Ovary (tissue), 10 donors: ENCODE measurements at regions of chr3 and their contacts with region 1.

Region 1: DNA sequence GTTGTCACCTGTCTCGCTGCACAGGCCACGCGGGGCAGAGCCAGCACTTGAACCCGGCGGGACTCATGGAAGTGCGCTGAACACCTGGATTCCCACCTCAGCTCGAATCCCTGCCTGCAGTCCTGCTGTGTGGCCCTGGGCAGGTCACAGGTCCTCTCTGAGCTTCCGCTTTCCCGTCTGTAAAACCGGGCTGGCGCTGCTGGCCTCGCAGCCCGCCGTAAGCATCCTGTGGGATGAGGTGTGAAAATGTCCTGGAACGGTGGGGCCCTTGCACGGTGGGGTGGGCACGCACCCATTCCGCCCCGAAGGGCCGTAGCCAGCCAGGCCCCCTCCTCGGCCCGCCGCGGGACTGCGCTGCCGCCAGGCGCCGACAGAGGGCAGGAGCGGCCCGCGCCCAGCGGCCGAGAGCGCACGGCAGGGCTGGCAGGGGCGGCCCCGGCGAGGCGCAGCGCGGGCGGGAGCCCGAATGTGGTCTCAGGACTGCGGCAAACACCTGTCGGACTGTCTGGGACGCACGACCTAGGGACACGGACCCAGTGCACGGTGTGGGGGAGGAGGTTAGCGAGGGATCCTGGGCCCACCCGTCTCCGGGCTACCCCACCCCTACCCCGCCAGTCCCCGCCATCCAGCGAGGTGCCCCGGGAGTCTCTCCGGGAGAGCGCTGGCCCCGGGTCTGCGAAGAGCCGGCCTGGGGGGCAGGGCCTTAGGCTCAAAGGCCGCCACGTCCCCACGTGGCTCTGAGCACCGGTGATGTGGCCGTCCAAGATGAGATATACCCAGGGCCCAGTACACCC is 40.4 kb downstream of the DNAJB8 start:
- DNase-seq: peak; percentile 33 to 69 (median 47)
- H3K4me3 ChIP-seq: no peak overlapping the region
- H3K27ac ChIP-seq: no peak overlapping the region
- H3K4me1 ChIP-seq: no peaks in the 10 kb centered on the region
- H3K27me3 ChIP-seq: no peaks in the 10 kb centered on the region
- CTCF ChIP-seq: peak; percentile 55 to 93 (median 90)
- EP300 ChIP-seq: no peak
- POLR2A ChIP-seq: no peak

Region 2: GRCh38 chr3:128487813-128488635 is 61.7 kb after region 1 on chr3:
- intact Hi-C with region 1: loop called in 2 of 4 experiments (anchors 5 kb)
- DNase-seq: peak; percentile 69 to 86 (median 75)
- H3K4me3 ChIP-seq: peak overlapping the region; percentile 58
- H3K27ac ChIP-seq: peak overlapping the region in 1 of 2 donors; percentile 8
- H3K4me1 ChIP-seq: peaks cover 19% of the 10 kb centered on the region
- H3K27me3 ChIP-seq: peaks cover 10% of the 10 kb centered on the region
- CTCF ChIP-seq: no peak
- EP300 ChIP-seq: no peak
- POLR2A ChIP-seq: no peak

Region 3: GRCh38 chr3:128559486-128560225 is 133.3 kb after region 1 on chr3:
- intact Hi-C with region 1: no loop called
- DNase-seq: no peak
- H3K4me3 ChIP-seq: no peak overlapping the region
- H3K27ac ChIP-seq: no peak overlapping the region
- H3K4me1 ChIP-seq: no peaks in the 10 kb centered on the region
- H3K27me3 ChIP-seq: no peaks in the 10 kb centered on the region
- CTCF ChIP-seq: no peak
- EP300 ChIP-seq: no peak
- POLR2A ChIP-seq: no peak